ENCODE measurements at regions of chr3 and their contacts with region 1.

Region 1: DNA sequence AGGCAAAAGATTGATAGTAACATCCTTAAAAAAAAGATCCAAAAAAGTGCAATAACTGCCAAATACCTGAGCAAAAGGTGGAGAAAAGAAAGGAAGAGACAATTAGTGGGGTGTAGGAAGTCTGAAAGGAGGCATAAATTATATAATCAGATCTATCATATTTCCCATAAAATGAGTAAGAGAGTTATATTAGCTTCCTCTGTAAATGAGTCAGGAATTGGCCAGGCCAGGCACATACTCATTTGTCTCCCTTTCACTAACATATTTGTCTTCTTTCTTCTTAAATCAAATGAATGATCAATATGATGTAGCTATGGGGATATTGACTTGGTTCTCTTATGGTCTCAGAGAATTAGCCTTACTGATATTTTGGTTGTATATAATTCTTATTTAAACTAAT is 292.3 kb upstream of the CADM2 start:
- DNase-seq: no peak
- H3K4me3 ChIP-seq: no peak overlapping the region
- H3K27ac ChIP-seq: no peak overlapping the region
- H3K4me1 ChIP-seq: no peaks in the 10 kb centered on the region
- H3K27me3 ChIP-seq: no peaks in the 10 kb centered on the region
- CTCF ChIP-seq: no peak

Region 2: DNA sequence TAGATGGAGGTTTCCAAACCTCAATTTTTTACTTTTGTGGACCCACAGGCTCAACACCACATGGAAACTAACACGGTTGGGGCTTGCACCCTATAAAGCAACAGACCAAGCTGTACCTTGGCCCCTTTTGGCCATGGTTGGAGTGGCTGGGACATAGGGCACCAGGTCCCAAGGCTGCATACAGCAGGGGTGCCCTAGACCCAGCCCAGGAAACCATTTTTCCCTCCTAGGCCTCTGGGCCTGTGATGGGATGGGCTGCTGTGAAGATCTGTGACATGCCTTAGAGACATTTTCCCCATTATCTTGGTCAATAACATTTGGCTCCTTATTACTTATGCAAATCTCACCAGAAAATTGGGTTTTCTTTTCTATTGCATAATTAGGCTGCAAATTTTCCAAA is 44.6 kb before region 1 on chr3:
- intact Hi-C with region 1: loop called (anchors 10 kb)
- DNase-seq: no peak
- H3K4me3 ChIP-seq: no peak overlapping the region
- H3K27ac ChIP-seq: no peak overlapping the region
- H3K4me1 ChIP-seq: no peaks in the 10 kb centered on the region
- H3K27me3 ChIP-seq: no peaks in the 10 kb centered on the region
- CTCF ChIP-seq: no peak

Region 3: GRCh38 chr3:84925571-84925970 is 259.1 kb after region 1 on chr3:
- intact Hi-C with region 1: no loop called
- DNase-seq: no peak
- H3K4me3 ChIP-seq: no peak overlapping the region
- H3K27ac ChIP-seq: no peak overlapping the region
- H3K4me1 ChIP-seq: no peaks in the 10 kb centered on the region
- H3K27me3 ChIP-seq: no peaks in the 10 kb centered on the region
- CTCF ChIP-seq: no peak

Measured in colonic mucosa (tissue), 4 donors.